WTC11 (cell line): ENCODE measurements at regions of chr20 and their contacts with region 1.

Region 1: DNA sequence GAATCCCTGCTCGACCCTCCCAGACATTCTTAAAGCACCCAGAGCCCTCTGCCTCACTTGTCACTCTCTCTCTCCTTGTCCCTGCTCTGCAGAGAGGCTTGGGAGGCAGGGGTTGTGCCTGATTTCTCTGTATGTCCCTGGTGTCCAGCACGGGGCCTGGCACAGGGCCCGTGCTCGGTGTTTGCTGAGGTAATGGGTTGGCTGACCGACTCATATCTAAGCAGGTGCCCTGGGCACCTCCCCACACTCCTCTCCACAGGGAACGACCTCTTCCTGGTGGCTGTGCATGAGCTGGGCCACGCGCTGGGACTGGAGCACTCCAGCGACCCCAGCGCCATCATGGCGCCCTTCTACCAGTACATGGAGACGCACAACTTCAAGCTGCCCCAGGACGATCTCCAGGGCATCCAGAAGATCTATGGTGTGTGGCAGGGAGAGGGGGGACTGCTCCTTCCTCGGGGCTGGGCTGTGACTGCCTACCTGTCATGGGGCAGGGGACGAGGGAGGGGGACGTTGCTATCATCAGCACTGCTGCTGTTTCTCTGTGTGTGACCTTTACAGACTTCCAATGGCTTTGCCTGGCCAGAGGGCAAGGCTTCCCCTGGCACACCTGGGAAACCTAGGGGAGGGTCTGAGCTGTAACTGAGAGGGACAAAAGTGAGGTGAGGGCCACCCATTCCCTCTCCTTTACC is 14.2 kb downstream of the MMP24OS start:
- DNase-seq: no peak
- ATAC-seq: no peak
- H3K4me3 Mint-ChIP-seq: peak overlapping the region; percentile 43
- H3K27ac Mint-ChIP-seq: peak overlapping the region; percentile 99
- H3K4me1 Mint-ChIP-seq: peaks cover 61% of the 10 kb centered on the region
- H3K27me3 Mint-ChIP-seq: no peaks in the 10 kb centered on the region
- CTCF ChIP-seq: no peak

Region 2: GRCh38 chr20:34850969-34851368 is 412.7 kb before region 1 on chr20:
- CTCF ChIA-PET with region 1: interaction called, 3 read pairs
- POLR2A ChIA-PET with region 1: interaction called, 12 read pairs
- DNase-seq: no peak
- ATAC-seq: no peak
- H3K4me3 Mint-ChIP-seq: no peak overlapping the region
- H3K27ac Mint-ChIP-seq: no peak overlapping the region
- H3K4me1 Mint-ChIP-seq: no peaks in the 10 kb centered on the region
- H3K27me3 Mint-ChIP-seq: no peaks in the 10 kb centered on the region
- CTCF ChIP-seq: no peak

Region 3: GRCh38 chr20:35226775-35227681 is 36.6 kb before region 1 on chr20:
- CTCF ChIA-PET with region 1: interaction called, 7 read pairs
- POLR2A ChIA-PET with region 1: interaction called, 15 read pairs
- DNase-seq: peak; percentile 79
- ATAC-seq: peak; percentile 76
- H3K4me3 Mint-ChIP-seq: peak overlapping the region; percentile 71
- H3K27ac Mint-ChIP-seq: no peak overlapping the region
- H3K4me1 Mint-ChIP-seq: peaks cover 15% of the 10 kb centered on the region
- H3K27me3 Mint-ChIP-seq: peaks cover 28% of the 10 kb centered on the region
- CTCF ChIP-seq: no peak